Natural killer cell (primary cell): ENCODE measurements at regions of chr22 and their contacts with region 1.

Region 1: DNA sequence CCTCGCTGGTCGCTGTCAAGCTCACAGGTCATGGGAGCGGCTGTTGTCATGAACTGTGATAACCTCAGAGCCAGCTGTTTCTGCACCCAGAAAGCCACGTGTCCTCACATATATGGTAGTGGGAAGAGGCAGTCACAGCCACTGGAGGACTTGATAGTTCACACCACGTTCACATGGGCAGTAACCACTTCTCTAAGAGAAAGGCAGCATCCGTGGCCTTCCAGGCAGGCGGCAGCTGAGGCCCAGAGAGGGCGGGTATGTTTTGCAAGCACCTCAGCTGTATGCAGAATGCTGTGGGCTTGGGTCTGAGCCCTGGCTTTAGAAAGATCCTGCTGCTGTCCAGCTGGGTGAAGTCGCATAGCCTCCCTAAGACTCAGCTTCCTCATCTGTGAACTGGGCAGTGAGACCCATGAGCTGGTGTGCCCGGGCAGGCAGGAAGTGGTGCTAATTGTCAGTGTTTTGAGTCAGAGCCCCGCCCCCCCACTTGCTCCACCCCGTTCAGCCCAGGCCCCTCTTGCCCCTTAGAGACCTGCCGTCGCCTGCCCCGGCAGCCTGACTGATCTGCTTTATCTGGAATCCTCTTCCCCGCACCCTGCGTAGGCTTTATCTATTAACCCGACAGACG is 13.3 kb downstream of the TTC38 start:
- DNase-seq: peak; percentile 72 to 81
- ATAC-seq: peak; percentile 82 to 94 (median 92)
- H3K4me3 ChIP-seq: peak overlapping the region; percentile 60
- H3K4me3 Mint-ChIP-seq: peak overlapping the region; percentile 96
- H3K27ac ChIP-seq: peak overlapping the region; percentile 97
- H3K27ac Mint-ChIP-seq: peak overlapping the region; percentile 97 to 99
- H3K4me1 ChIP-seq: peaks cover 93% of the 10 kb centered on the region
- H3K4me1 Mint-ChIP-seq: peaks cover 76 to 79% of the 10 kb centered on the region in 2 donors
- H3K27me3 ChIP-seq: no peaks in the 10 kb centered on the region
- H3K27me3 Mint-ChIP-seq: no peaks in the 10 kb centered on the region
- CTCF ChIP-seq: no peak

Region 2: DNA sequence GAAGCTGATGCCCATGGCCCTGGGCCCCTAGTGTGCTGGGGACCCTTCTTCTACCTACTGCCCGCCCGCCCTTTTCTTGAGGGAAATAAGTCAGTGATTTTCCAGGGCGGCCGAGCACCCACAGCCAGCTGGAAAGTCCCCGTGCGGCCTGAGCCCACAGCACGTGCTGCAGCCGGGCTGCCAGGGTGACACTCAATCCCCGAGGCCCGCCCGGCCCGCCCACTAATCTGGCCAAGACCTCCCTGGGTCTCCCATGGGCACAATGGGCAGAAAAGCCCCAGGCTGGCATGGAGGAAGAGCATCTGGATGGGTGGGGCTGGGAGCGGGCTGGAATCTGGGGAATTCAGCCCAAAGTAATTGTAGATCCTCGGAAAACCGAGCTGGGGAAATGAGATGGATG is 329.0 kb before region 1 on chr22:
- intact Hi-C with region 1: no loop called
- DNase-seq: no peak
- ATAC-seq: no peak
- H3K4me3 ChIP-seq: no peak overlapping the region
- H3K4me3 Mint-ChIP-seq: no peak overlapping the region
- H3K27ac ChIP-seq: no peak overlapping the region
- H3K27ac Mint-ChIP-seq: no peak overlapping the region
- H3K4me1 ChIP-seq: peaks cover 6% of the 10 kb centered on the region
- H3K4me1 Mint-ChIP-seq: no peaks in the 10 kb centered on the region
- H3K27me3 ChIP-seq: no peaks in the 10 kb centered on the region
- H3K27me3 Mint-ChIP-seq: peaks cover 4 to 10% of the 10 kb centered on the region in 2 donors
- CTCF ChIP-seq: no peak

Region 3: DNA sequence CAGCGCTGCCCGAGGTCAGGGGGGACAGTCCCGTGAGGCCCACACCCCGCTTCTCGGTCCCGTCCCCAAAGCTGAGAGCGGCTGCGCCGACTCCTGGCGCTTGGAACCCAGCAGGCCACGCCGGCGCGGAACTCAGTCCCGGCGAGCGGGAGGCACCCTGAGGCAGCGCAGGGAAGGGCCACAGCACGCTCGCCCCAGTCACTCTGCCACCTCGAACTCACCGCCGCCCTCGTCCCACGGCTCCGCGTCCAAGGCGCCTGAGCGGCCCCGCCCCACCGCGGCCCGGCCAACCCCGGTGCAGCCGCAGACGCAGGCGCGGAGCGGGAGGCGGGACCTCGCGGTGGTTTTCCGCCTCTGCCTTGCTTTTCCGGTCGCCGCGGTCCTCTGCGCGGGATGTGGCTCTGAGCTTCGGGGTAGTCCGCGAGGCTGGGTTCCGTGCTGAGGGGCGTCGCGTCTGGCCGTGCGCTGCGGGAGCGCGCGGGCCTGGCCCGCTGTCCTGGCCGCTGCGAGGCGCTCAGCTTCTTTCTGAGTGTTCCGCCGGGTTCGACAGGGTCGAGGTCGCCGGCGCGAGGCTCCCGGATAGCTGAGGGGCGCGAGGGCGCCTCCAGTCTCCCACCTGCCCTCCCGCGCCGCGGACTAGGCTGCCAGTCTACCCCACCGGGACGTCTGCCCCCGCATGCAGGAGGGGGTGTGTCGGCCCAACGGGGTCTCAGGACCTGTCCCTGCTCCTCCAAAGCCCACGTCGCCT is 30.9 kb before region 1 on chr22 and contains the start of gene CDPF1:
- intact Hi-C with region 1: loop called (anchors 1 kb)
- DNase-seq: peak; percentile 86 to 95
- ATAC-seq: peak; percentile 88 to 93 (median 92)
- H3K4me3 ChIP-seq: peak within 1 kb of the TSS; percentile 74
- H3K4me3 Mint-ChIP-seq: peak within 1 kb of the TSS; percentile 88
- H3K27ac ChIP-seq: peak within 1 kb of the TSS; percentile 66
- H3K27ac Mint-ChIP-seq: peak within 1 kb of the TSS; percentile 45 to 93
- H3K4me1 ChIP-seq: peaks cover 16% of the 10 kb centered on the region
- H3K4me1 Mint-ChIP-seq: peaks cover 21 to 44% of the 10 kb centered on the region in 2 donors
- H3K27me3 ChIP-seq: no peaks in the 10 kb centered on the region
- H3K27me3 Mint-ChIP-seq: no peaks in the 10 kb centered on the region
- CTCF ChIP-seq: no peak
- total RNA-seq, gene CDPF1: 5.0 to 11.4 (median 7.2) TPM

Region 4: GRCh38 chr22:46267431-46268279 is 13.5 kb before region 1 on chr22 and contains the start of gene TTC38:
- intact Hi-C with region 1: loop called (anchors 2 kb)
- DNase-seq: peak; percentile 57 to 63
- ATAC-seq: peak; percentile 83 to 86 (median 86)
- H3K4me3 ChIP-seq: peak within 1 kb of the TSS; percentile 61
- H3K4me3 Mint-ChIP-seq: peak within 1 kb of the TSS; percentile 95
- H3K27ac ChIP-seq: peak within 1 kb of the TSS; percentile 28
- H3K27ac Mint-ChIP-seq: peak within 1 kb of the TSS; percentile 82 to 88
- H3K4me1 ChIP-seq: peaks cover 48% of the 10 kb centered on the region
- H3K4me1 Mint-ChIP-seq: peaks cover 61 to 65% of the 10 kb centered on the region in 2 donors
- H3K27me3 ChIP-seq: no peaks in the 10 kb centered on the region
- H3K27me3 Mint-ChIP-seq: no peaks in the 10 kb centered on the region
- CTCF ChIP-seq: no peak
- total RNA-seq, gene TTC38: 251 to 313 (median 312) TPM

Region 5: DNA sequence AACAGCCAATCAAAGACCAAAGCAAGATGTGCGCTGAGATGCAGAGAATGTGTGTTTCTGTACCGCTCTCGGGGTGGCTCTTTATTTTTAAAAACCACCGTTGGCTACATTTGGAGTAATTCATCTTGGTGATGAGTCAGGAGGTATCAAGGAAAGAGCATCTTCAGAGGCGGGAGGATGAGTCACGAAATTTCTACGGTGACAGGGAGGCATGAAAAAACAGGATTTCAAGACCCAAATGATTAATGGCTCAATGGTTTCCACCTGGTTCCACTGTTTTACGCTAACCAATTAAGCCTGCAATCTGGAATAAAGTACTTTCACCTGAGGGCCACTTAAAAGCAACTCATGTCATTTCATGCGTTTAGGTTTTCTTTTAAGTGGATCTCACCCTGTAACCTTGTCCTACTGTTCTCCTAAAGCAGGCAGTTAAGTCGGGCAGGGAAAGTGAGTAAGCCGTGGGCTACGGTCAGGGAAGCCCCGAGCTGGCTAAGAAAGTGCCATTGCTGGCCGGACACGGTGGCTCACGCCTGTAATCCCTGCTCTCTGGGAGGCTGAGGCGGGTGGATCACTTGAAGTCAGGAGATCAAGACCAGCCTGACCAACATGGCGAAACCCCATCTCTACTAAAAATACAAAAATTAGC is 181.7 kb after region 1 on chr22:
- intact Hi-C with region 1: no loop called
- DNase-seq: no peak
- ATAC-seq: no peak
- H3K4me3 ChIP-seq: no peak overlapping the region
- H3K4me3 Mint-ChIP-seq: no peak overlapping the region
- H3K27ac ChIP-seq: no peak overlapping the region
- H3K27ac Mint-ChIP-seq: no peak overlapping the region
- H3K4me1 ChIP-seq: no peaks in the 10 kb centered on the region
- H3K4me1 Mint-ChIP-seq: no peaks in the 10 kb centered on the region
- H3K27me3 ChIP-seq: no peaks in the 10 kb centered on the region
- H3K27me3 Mint-ChIP-seq: no peaks in the 10 kb centered on the region
- CTCF ChIP-seq: no peak